ENCODE measurements at regions of chr12 and their contacts with region 1.

Region 1: DNA sequence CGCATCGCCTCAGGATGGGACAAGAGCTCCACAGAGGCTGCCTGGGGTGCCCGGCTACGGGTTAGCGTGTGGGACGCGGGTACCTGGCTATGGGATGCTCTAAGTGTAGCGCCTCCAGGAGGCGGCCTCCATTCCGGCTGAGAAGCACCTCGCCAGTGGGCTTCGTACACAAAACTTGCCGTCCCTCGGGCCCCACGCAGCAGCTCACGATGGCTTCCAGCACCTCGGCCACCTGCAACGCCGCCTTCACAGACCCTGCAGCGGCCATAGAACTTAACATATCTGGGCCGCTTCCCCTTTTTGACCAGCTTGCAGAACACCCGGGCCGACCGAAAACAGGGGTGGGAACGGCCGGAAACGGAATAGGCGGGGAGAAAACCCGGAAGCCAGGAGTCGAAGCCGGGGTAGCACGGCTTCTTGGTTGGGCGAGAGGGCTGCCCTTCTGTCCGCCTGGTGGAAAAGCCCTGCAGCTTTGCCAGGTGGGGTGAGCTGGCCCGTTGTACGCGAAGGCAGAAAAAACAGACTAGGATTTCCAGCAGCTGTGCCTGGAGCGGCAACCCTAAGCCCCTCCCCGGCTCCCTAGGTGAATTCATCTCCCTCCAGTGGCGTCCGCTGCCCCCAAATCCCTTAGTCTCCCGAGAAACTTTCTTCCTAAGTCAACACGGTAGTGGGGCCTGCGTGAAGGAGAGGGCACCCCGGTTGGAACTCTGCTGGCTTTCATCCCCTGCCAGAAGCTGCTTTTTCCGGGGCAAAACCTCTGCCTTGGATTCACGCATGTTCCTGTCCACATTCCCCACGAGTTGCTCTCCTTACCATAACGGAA is at the start of gene BBS10:
- DNase-seq: peak; percentile 94
- ATAC-seq: peak; percentile 97
- H3K4me3 ChIP-seq: peak within 1 kb of the TSS; percentile 76 to 90 (median 79)
- H3K4me3 Mint-ChIP-seq: peak within 1 kb of the TSS; percentile 92
- H3K27ac ChIP-seq: peak within 1 kb of the TSS; percentile 86 to 89
- H3K27ac Mint-ChIP-seq: peak within 1 kb of the TSS; percentile 98
- H3K4me1 ChIP-seq: peaks cover 17% of the 10 kb centered on the region in 2 donors
- H3K4me1 Mint-ChIP-seq: peaks cover 27% of the 10 kb centered on the region
- H3K27me3 ChIP-seq: no peaks in the 10 kb centered on the region
- H3K27me3 Mint-ChIP-seq: no peaks in the 10 kb centered on the region
- CTCF ChIP-seq: peak; percentile 9
- total RNA-seq, gene BBS10: 11.2 and 12.9 TPM in 2 replicates

Region 2: DNA sequence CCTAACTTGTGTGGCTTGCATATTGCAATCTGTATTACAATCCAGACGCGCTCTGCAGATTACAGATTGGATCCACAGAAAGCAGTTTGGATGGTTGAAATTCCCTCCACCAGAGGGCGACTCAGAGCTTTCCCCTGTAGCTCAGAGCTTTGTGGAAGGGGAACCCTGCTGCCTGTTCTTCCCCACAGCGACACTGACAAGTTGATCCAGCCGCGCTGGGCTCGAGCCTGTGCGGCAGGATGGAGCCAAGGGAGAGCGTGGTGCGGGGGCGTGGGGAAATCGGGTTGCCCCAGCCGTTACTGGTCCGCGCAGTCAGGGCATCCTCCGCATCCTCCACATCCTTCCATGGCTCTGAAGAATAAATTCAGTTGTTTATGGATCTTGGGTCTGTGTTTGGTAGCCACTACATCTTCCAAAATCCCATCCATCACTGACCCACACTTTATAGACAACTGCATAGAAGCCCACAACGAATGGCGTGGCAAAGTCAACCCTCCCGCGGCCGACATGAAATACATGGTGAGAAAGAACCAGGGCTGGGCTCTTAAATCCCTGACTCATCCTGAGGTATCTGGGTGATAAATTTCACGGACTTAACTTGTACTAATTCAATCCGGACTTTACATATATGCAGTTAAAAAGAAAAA is 1013.8 kb before region 1 on chr12 and contains the start of gene GLIPR1L1:
- CTCF ChIA-PET with region 1: no interaction called
- POLR2A ChIA-PET with region 1: no interaction called
- intact Hi-C with region 1: loop called (anchors 5 kb)
- DNase-seq: peak; percentile 86
- ATAC-seq: peak; percentile 83
- H3K4me3 ChIP-seq: peak within 1 kb of the TSS in 2 of 5 experiments; percentile 33 to 41
- H3K4me3 Mint-ChIP-seq: peak within 1 kb of the TSS; percentile 76
- H3K27ac ChIP-seq: no peak within 1 kb of the TSS
- H3K27ac Mint-ChIP-seq: no peak within 1 kb of the TSS
- H3K4me1 ChIP-seq: peaks cover 16% of the 10 kb centered on the region in 2 donors
- H3K4me1 Mint-ChIP-seq: peaks cover 18% of the 10 kb centered on the region
- H3K27me3 ChIP-seq: peaks cover 0 to 14% (median 6%) of the 10 kb centered on the region in 4 experiments
- H3K27me3 Mint-ChIP-seq: peaks cover 25% of the 10 kb centered on the region
- CTCF ChIP-seq: peak; percentile 93
- total RNA-seq, gene GLIPR1L1: not detected in 2 replicates

Region 3: GRCh38 chr12:75471902-75472890 is 876.1 kb before region 1 on chr12:
- CTCF ChIA-PET with region 1: no interaction called
- POLR2A ChIA-PET with region 1: no interaction called
- intact Hi-C with region 1: loop called (anchors 1 kb)
- DNase-seq: peak; percentile 78
- ATAC-seq: peak; percentile 87
- H3K4me3 ChIP-seq: peak overlapping the region in 3 of 5 experiments; percentile 5 to 49 (median 16)
- H3K4me3 Mint-ChIP-seq: peak overlapping the region; percentile 72
- H3K27ac ChIP-seq: peak overlapping the region; percentile 68 to 76
- H3K27ac Mint-ChIP-seq: peak overlapping the region; percentile 94
- H3K4me1 ChIP-seq: peaks cover 20 to 22% of the 10 kb centered on the region in 2 donors
- H3K4me1 Mint-ChIP-seq: peaks cover 41% of the 10 kb centered on the region
- H3K27me3 ChIP-seq: no peaks in the 10 kb centered on the region
- H3K27me3 Mint-ChIP-seq: no peaks in the 10 kb centered on the region
- CTCF ChIP-seq: no peak

Region 4: GRCh38 chr12:75526655-75527511 is 821.4 kb before region 1 on chr12:
- CTCF ChIA-PET with region 1: interaction called, 7 read pairs
- POLR2A ChIA-PET with region 1: no interaction called
- intact Hi-C with region 1: loop called (anchors 5 kb)
- DNase-seq: peak; percentile 62
- ATAC-seq: peak; percentile 57
- H3K4me3 ChIP-seq: no peak overlapping the region
- H3K4me3 Mint-ChIP-seq: no peak overlapping the region
- H3K27ac ChIP-seq: no peak overlapping the region
- H3K27ac Mint-ChIP-seq: no peak overlapping the region
- H3K4me1 ChIP-seq: peaks cover 5 to 6% of the 10 kb centered on the region in 2 donors
- H3K4me1 Mint-ChIP-seq: peaks cover 4% of the 10 kb centered on the region
- H3K27me3 ChIP-seq: peaks cover 0 to 3% (median 0%) of the 10 kb centered on the region in 4 experiments
- H3K27me3 Mint-ChIP-seq: peaks cover 27% of the 10 kb centered on the region
- CTCF ChIP-seq: peak; percentile 82

Region 5: DNA sequence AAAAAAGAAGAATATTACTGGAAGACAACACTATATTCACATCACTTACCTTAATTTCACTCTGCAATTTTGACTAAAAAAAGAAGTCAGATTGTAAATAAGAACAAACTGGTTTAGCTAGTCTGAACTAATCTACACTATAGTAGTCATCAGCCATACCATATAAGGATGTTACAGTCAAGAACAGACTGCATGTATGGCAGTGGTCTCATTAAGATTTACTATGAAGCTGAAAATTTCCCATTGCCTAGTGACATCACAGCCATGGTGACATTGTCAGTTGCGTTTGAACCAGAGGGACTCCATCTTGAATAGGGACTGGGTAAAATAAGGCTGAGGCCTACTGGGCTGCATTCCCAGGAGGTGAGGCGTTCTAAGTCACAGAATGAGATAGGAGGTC is 159.9 kb after region 1 on chr12:
- CTCF ChIA-PET with region 1: interaction called, 4 read pairs
- POLR2A ChIA-PET with region 1: interaction called, 3 read pairs
- intact Hi-C with region 1: loop called (anchors 1 kb)
- DNase-seq: no peak
- ATAC-seq: no peak
- H3K4me3 ChIP-seq: no peak overlapping the region
- H3K4me3 Mint-ChIP-seq: no peak overlapping the region
- H3K27ac ChIP-seq: no peak overlapping the region
- H3K27ac Mint-ChIP-seq: peak overlapping the region; percentile 26
- H3K4me1 ChIP-seq: peaks cover 16 to 29% of the 10 kb centered on the region in 2 donors
- H3K4me1 Mint-ChIP-seq: peaks cover 51% of the 10 kb centered on the region
- H3K27me3 ChIP-seq: no peaks in the 10 kb centered on the region
- H3K27me3 Mint-ChIP-seq: no peaks in the 10 kb centered on the region
- CTCF ChIP-seq: no peak

Region 6: GRCh38 chr12:76586764-76587395 is 238.6 kb after region 1 on chr12:
- CTCF ChIA-PET with region 1: interaction called, 12 read pairs
- POLR2A ChIA-PET with region 1: no interaction called
- intact Hi-C with region 1: loop called (anchors 1 kb)
- DNase-seq: peak; percentile 69
- ATAC-seq: peak; percentile 57
- H3K4me3 ChIP-seq: no peak overlapping the region
- H3K4me3 Mint-ChIP-seq: no peak overlapping the region
- H3K27ac ChIP-seq: no peak overlapping the region
- H3K27ac Mint-ChIP-seq: no peak overlapping the region
- H3K4me1 ChIP-seq: no peaks in the 10 kb centered on the region
- H3K4me1 Mint-ChIP-seq: peaks cover 5% of the 10 kb centered on the region
- H3K27me3 ChIP-seq: no peaks in the 10 kb centered on the region
- H3K27me3 Mint-ChIP-seq: no peaks in the 10 kb centered on the region
- CTCF ChIP-seq: peak; percentile 92

Measured in B cell (primary cell).